ENCODE measurements at regions of chr13 and their contacts with region 1.

Region 1: DNA sequence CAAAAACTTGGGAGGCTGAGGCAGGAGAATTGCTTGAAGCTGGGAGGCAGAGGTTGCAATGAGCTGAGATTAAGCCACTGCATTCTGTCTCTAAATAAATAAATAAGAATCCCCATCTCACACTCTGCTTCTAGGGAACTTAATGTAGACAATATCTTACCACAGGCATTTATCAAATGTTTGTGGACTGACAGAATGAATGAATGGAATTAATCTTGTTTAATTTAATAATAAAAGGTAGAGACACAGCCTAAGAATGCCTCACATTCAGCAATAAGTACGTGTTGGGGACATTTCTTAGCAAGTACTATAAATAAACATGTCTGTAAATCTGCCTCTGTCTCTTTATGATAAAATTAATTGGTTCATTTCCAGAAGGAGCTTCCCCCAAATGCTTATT is 36.2 kb upstream of the RBM26 start:
- DNase-seq: no peak
- H3K4me3 ChIP-seq: no peak overlapping the region
- H3K27me3 ChIP-seq: no peaks in the 10 kb centered on the region
- CTCF ChIP-seq: no peak

Region 2: GRCh38 chr13:79457948-79458347 is 15.7 kb after region 1 on chr13:
- CTCF ChIA-PET with region 1: no interaction called
- POLR2A ChIA-PET with region 1: no interaction called
- DNase-seq: peak; percentile 59
- H3K4me3 ChIP-seq: no peak overlapping the region
- H3K27me3 ChIP-seq: no peaks in the 10 kb centered on the region
- CTCF ChIP-seq: no peak

Region 3: DNA sequence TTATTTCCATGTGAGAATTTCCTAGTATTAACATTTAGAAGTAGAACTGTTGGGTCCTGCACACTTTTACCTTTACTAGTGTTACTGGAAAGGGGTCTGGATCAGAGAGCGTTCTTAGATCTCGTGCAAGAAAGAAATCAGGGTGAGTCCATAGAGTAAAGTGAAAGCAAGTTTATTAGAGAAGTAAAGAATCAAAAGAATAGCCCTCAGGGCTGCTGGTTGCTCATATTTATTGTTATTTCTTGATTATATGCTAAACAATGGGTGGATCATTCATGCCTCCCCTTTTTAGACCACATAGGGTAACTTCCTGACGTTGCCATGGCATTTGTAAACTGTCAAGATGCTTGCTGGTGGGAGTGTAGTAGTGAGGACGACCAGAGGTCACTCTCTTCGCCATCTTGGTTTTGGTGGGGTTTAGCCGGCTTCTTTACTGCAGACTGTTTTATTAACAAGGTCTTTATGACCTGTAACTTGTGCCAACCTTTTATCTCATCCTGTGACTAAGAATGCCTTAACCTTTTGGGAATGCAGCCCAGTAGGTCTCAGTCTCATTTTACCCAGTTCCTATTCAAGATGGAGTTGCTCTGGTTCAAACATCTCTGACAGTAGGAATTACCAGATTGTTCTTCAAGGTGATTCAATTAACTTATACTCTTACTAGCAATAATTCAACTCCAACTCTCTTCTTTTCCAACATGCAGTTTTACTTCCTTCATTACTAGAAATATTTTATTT is 66.2 kb after region 1 on chr13:
- CTCF ChIA-PET with region 1: no interaction called
- POLR2A ChIA-PET with region 1: interaction called, 12 read pairs
- DNase-seq: no peak
- H3K4me3 ChIP-seq: no peak overlapping the region
- H3K27me3 ChIP-seq: no peaks in the 10 kb centered on the region
- CTCF ChIP-seq: no peak

Measured in BJ (cell line).